HepG2 (cell line): ENCODE measurements at regions of chr7 and their contacts with region 1.

Region 1: GRCh38 chr7:131688738-131689661 is 132.6 kb upstream of the PODXL start:
- DNase-seq: peak; percentile 49
- ATAC-seq: peak; percentile 84
- H3K4me3 ChIP-seq: no peak overlapping the region
- H3K27ac ChIP-seq: no peak overlapping the region
- H3K4me1 ChIP-seq: no peaks in the 10 kb centered on the region
- H3K27me3 ChIP-seq: peaks cover 2 to 38% of the 10 kb centered on the region in 2 experiments; a peak in 3 of 5 replicates
- CTCF ChIP-seq: peak; percentile 92
- EP300 ChIP-seq: no peak
- POLR2A ChIP-seq: no peak
- RAD21 ChIP-seq: peak; percentile 73

Region 2: DNA sequence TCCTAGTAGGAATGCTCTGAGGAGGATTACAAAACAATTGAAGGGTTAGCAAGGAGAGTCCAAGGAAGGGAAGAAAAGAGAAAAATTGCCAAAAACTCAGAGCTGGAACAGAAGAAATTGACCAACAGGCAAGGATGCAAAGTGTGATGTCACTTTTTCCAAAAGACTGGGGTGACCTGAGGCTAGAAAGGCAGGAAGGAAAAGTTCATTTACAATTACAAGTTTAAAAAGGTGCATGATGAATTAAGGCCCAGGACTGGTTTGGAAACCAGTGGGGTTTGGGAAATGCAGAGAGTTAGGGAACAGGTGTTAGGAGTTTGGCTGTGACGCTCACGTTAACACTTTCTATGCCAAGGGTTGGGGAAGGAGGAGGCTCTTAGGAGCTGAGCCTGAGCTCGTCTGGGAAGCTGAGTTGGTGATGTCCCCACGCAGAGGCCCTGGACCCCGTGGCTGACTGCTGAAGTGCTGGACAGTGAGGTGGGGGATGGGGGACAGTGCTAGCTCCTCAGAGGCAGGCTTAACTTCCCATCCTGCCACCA is 39.9 kb before region 1 on chr7:
- CTCF ChIA-PET with region 1: no interaction called
- POLR2A ChIA-PET with region 1: no interaction called
- in situ Hi-C with region 1: no loop called
- intact Hi-C with region 1: loop called (anchors 2 kb)
- DNase-seq: no peak
- ATAC-seq: no peak
- H3K4me3 ChIP-seq: no peak overlapping the region
- H3K27ac ChIP-seq: no peak overlapping the region
- H3K4me1 ChIP-seq: no peaks in the 10 kb centered on the region
- H3K27me3 ChIP-seq: no peaks in the 10 kb centered on the region; a peak in 1 of 5 replicates
- CTCF ChIP-seq: no peak
- EP300 ChIP-seq: no peak
- POLR2A ChIP-seq: no peak
- RAD21 ChIP-seq: no peak

Region 3: GRCh38 chr7:131664570-131664969 is 24.4 kb before region 1 on chr7:
- CTCF ChIA-PET with region 1: no interaction called
- POLR2A ChIA-PET with region 1: no interaction called
- in situ Hi-C with region 1: no loop called
- intact Hi-C with region 1: no loop called
- DNase-seq: no peak
- ATAC-seq: no peak
- H3K4me3 ChIP-seq: no peak overlapping the region
- H3K27ac ChIP-seq: no peak overlapping the region
- H3K4me1 ChIP-seq: no peaks in the 10 kb centered on the region
- H3K27me3 ChIP-seq: no peaks in the 10 kb centered on the region
- CTCF ChIP-seq: no peak
- EP300 ChIP-seq: no peak
- POLR2A ChIP-seq: no peak
- RAD21 ChIP-seq: no peak

Region 4: DNA sequence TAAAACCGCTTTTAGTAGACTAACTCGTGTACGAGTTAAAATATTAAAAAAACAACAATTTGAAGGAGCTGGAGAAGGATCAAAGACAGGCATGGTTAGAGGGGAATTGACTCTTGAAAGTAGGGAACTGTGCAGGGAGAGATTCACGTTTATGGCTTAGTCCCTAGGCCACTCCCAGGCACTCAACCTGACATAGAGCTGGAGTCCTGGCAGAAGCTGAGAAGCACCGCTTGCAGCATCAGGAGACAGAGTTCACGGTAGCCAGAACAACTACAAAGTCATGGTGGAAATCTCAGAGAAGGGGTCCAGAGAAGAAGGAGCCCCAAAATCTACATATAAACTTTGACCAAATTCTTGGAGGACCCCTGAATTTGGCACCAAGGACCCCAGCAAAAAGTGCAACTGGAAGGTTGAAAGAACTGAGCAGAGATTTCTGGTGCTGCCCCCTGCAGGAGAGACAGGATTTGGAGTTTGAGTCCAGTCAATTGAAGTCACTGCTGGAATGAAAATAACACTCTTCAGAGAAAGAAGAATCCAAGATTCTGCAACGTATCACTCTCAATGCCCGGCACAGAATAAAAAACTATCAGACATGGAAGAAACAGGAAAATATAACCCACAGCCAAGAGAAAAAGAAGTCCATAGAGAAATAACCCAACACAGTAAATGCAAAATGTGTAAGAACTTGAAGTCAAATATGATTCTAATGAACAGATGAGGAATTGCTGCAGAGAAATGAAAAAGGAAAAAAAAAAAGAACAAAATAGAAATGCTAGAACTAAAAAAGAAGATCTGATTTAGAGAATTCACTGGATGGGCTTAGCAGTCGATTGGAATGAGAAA is 360.7 kb after region 1 on chr7:
- CTCF ChIA-PET with region 1: no interaction called
- POLR2A ChIA-PET with region 1: no interaction called
- in situ Hi-C with region 1: loop called (anchors 25 kb)
- intact Hi-C with region 1: no loop called
- DNase-seq: peak; percentile 18
- ATAC-seq: peak; percentile 48; the same call in 1 of the 3 replicates
- H3K4me3 ChIP-seq: no peak overlapping the region
- H3K27ac ChIP-seq: no peak overlapping the region
- H3K4me1 ChIP-seq: no peaks in the 10 kb centered on the region
- H3K27me3 ChIP-seq: no peaks in the 10 kb centered on the region
- CTCF ChIP-seq: peak; percentile 56; the same call in 1 of the 2 replicates
- EP300 ChIP-seq: no peak
- POLR2A ChIP-seq: no peak
- RAD21 ChIP-seq: no peak